Activated naive CD4-positive, alpha-beta T cell treated with anti-CD3 and anti-CD28 coated beads, Interleukin-2, amount 10 ng/mL, durations not matched to agents 7 days and 5 days (primary cell): ENCODE measurements at regions of chr19 and their contacts with region 1.

Region 1: DNA sequence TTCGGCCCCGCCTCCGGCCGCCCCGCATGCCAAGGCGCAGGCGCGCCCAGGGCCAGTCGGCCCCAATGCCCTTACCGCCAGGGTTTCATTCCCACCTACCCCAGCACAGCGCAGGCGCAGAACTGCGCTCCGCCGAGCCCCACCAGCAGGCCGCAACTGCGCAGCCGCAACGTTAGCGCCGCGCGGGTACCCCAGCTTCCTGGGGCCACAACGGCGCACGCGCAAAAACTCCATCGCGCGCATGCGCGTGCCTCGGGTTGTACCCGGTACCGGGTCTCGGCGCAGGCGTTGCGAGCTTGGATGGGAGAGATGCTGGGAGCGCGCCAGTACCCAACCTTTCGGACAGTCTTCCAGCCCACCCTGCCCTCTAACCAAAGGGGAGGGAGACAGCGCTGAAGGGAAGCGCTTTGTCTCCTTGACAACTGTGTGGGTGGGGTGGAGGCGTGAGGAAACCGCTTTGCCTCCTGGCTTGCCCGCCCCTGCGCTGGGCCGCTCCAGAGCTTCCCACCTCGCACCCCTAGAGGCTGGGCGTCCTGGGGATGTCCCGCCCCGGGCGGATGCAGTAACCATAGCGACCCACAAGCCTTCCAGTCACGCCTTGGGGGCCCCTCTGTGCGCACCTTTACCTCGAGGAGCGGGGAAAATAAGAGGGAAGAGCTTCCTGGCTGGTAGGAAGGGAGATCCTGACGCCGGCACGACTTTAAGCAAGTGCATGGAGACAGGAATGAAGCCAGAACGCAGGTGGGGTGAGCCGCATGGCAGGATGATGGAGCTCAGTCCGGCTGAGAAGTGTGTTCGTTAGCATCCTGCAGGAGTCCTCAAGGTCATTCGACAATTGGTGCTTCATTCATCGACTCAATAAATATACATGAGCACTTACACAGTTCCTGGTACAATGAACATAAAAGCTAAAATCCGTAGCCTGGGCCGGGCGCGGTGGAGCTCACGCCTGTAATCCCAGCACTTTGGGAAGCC is 525 bp upstream of the MYPOP start:
- DNase-seq: peak; percentile 99
- H3K4me3 Mint-ChIP-seq: peak overlapping the region; percentile 98
- H3K27ac Mint-ChIP-seq: peak overlapping the region; percentile 82
- H3K4me1 Mint-ChIP-seq: peaks cover 31% of the 10 kb centered on the region
- H3K27me3 Mint-ChIP-seq: peaks cover 25% of the 10 kb centered on the region

Region 2: DNA sequence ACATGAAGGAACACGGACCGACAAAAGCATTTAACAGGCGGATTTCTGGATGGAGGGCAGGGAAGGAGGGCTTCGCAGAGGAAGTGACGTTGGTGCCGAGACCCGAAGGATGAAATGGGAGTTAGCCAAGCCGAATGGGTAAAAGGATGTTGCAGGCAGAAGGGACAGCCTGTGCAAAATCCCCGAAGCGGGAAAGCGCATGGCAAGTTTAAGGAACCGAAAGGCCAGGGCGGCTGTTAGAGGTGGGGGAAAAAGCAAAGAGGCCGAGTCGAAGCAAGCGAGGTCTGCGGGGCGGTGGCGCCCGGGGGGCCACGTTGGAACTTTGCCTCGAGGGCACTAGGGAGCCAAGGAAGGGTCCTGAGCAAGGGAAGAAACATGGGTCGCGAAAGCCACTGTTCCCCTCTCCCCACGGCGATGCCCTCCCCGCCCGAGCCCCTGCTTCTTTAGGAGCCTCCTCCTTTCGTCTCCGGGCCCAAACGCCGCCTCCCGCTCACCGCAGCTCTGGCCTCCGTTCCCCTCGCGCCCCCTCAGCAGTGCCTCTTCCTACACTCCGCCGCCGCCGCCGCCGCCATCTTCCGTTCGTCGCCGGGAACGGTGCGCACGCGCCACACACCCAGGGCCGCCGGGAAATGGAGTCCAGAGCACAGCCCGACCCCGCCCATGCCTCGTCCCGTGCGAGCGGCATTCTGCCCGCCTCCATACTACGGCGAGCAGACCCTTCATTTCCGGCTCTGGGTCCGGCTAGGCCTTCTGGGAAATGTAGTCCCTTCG is 40.2 kb before region 1 on chr19 and contains the start of gene SYMPK:
- CTCF ChIA-PET with region 1: interaction called, 10 read pairs
- DNase-seq: peak; percentile 99
- H3K4me3 Mint-ChIP-seq: peak within 1 kb of the TSS; percentile 94
- H3K27ac Mint-ChIP-seq: peak within 1 kb of the TSS; percentile 94
- H3K4me1 Mint-ChIP-seq: peaks cover 40% of the 10 kb centered on the region
- H3K27me3 Mint-ChIP-seq: peaks cover 48% of the 10 kb centered on the region